ENCODE measurements at regions of chr10 and their contacts with region 1.

Region 1: DNA sequence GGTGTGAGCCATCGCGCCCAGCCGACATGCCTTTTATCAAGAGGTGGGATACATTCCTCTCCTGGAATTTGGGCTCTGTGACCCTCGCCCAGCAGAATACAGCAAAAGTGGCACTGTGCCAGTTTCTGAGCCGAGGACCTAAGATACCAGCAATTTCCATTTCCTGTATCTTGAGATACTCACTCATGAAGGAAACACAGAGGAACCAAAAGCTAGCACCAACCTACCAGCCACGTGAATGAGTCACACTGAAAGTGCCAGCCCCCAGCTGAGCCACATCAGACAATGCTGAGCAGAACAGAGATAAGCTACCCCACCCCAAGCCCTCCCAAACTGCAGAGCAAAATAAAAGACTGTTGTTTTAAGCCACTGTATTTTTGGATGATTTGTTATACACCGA is 56.3 kb downstream of the CACUL1 start:
- DNase-seq: peak; percentile 91
- H3K4me3 Mint-ChIP-seq: peak overlapping the region; percentile 33
- H3K27ac Mint-ChIP-seq: peak overlapping the region; percentile 40
- H3K4me1 Mint-ChIP-seq: peaks cover 21% of the 10 kb centered on the region
- H3K27me3 Mint-ChIP-seq: no peaks in the 10 kb centered on the region

Region 2: GRCh38 chr10:118840071-118840775 is 141.8 kb after region 1 on chr10:
- CTCF ChIA-PET with region 1: no interaction called
- POLR2A ChIA-PET with region 1: no interaction called
- intact Hi-C with region 1: loop called (anchors 1 kb)
- DNase-seq: peak; percentile 93
- H3K4me3 Mint-ChIP-seq: no peak overlapping the region
- H3K27ac Mint-ChIP-seq: peak overlapping the region; percentile 14
- H3K4me1 Mint-ChIP-seq: peaks cover 13% of the 10 kb centered on the region
- H3K27me3 Mint-ChIP-seq: no peaks in the 10 kb centered on the region

Measured in activated CD4-positive, alpha-beta memory T cell treated with anti-CD3 and anti-CD28 coated beads for 36 hours (primary cell).